Adrenal gland (tissue), 19 donors: ENCODE measurements at regions of chr7 and their contacts with region 1.

Region 1: DNA sequence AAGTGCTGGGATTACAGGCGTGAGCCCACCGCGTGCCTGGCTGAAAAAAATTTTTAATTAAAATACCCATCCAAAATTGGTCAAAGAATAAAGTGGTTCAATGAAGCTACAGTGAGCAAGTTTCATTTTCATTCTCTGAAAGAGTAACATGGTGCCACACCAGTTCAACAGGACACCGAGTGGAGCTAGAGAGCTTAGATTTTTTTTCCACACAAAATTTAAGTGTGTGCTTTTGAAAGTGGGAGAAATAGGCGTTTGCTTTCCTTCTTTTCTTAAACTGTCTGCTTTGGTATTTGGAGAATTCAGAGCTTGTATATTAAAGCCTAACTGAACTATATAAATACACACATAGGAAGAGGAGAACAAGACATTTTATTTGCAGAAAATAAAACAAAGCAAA is 43.4 kb downstream of the BPGM start:
- DNase-seq: no peak
- H3K4me3 ChIP-seq: peak overlapping the region in 1 of 4 donors; percentile 23
- H3K27ac ChIP-seq: peak overlapping the region in 2 of 5 donors; percentile 43 to 51
- H3K4me1 ChIP-seq: no peaks in the 10 kb centered on the region
- H3K27me3 ChIP-seq: no peaks in the 10 kb centered on the region
- CTCF ChIP-seq: peak; percentile 21 to 57 (median 42)
- POLR2A ChIP-seq: no peak

Region 2: GRCh38 chr7:134741907-134742635 is 52.1 kb after region 1 on chr7:
- intact Hi-C with region 1: loop called in 1 of 2 experiments (anchors 10 kb)
- DNase-seq: no peak
- H3K4me3 ChIP-seq: no peak overlapping the region
- H3K27ac ChIP-seq: peak overlapping the region in 2 of 5 donors; percentile 43 to 79
- H3K4me1 ChIP-seq: no peaks in the 10 kb centered on the region
- H3K27me3 ChIP-seq: no peaks in the 10 kb centered on the region
- CTCF ChIP-seq: no peak
- POLR2A ChIP-seq: no peak

Region 3: GRCh38 chr7:134789967-134790685 is 100.1 kb after region 1 on chr7:
- intact Hi-C with region 1: no loop called
- DNase-seq: no peak
- H3K4me3 ChIP-seq: no peak overlapping the region
- H3K27ac ChIP-seq: peak overlapping the region in 2 of 5 donors; percentile 57 to 70
- H3K4me1 ChIP-seq: peaks cover 0 to 6% of the 10 kb centered on the region in 2 donors
- H3K27me3 ChIP-seq: no peaks in the 10 kb centered on the region
- CTCF ChIP-seq: no peak
- POLR2A ChIP-seq: no peak

Region 4: DNA sequence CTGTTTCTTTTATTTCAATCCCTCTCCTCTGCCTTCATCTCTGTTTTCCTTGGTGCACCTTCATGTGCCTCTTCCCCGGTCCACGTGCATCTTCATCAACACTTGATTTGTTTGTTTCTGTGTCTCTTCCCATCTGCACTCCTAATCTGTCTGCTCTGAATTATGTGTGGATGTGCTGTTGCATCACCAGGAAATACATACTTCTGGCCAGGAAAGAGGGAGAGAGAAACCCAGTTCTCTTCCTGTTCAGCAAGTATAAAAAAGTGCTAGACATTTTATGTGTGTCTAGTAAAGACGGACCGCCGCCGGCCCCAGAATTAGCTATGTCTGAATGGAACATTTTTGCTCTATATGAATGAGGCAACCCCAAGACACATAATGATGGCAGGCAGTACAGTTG is 183.2 kb after region 1 on chr7:
- intact Hi-C with region 1: no loop called
- DNase-seq: no peak
- H3K4me3 ChIP-seq: no peak overlapping the region
- H3K27ac ChIP-seq: peak overlapping the region in 1 of 5 donors; percentile 21
- H3K4me1 ChIP-seq: peaks cover 0 to 10% of the 10 kb centered on the region in 2 donors
- H3K27me3 ChIP-seq: peaks cover 8% of the 10 kb centered on the region
- CTCF ChIP-seq: no peak
- POLR2A ChIP-seq: no peak

Region 5: DNA sequence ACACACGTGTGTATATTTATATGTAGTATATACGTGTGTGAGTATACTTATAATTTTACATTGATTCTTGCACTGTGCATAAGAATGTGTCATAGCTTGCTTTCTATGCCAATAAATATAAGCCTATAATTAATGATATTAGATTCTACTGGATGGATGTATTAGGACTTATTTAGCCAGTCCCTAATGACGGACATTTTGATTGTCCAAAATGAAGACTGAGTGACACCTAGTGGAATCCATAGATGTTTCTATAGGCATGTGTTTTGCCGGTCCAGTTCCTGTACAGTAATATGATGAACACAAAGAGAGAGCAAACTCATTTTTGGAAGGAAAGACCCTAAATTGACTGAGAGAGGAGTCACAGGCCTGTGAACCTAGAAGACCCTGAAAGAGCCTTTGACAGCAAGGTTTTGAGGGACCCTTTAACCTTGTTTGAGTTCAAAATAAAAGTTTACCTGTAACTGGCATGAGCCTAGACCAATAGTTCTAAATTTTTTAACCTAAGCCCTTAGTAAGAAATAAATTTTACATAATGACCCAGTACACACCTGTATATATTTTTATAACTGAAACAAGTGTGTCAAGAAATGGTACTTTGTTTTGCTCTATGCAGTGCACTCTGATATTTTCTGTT is 253.9 kb after region 1 on chr7:
- intact Hi-C with region 1: loop called in 1 of 2 experiments (anchors 10 kb)
- DNase-seq: no peak
- H3K4me3 ChIP-seq: no peak overlapping the region
- H3K27ac ChIP-seq: no peak overlapping the region
- H3K4me1 ChIP-seq: no peaks in the 10 kb centered on the region
- H3K27me3 ChIP-seq: no peaks in the 10 kb centered on the region
- CTCF ChIP-seq: peak in 3 of 6 experiments; percentile 18 to 26 (median 20)
- POLR2A ChIP-seq: no peak

Region 6: DNA sequence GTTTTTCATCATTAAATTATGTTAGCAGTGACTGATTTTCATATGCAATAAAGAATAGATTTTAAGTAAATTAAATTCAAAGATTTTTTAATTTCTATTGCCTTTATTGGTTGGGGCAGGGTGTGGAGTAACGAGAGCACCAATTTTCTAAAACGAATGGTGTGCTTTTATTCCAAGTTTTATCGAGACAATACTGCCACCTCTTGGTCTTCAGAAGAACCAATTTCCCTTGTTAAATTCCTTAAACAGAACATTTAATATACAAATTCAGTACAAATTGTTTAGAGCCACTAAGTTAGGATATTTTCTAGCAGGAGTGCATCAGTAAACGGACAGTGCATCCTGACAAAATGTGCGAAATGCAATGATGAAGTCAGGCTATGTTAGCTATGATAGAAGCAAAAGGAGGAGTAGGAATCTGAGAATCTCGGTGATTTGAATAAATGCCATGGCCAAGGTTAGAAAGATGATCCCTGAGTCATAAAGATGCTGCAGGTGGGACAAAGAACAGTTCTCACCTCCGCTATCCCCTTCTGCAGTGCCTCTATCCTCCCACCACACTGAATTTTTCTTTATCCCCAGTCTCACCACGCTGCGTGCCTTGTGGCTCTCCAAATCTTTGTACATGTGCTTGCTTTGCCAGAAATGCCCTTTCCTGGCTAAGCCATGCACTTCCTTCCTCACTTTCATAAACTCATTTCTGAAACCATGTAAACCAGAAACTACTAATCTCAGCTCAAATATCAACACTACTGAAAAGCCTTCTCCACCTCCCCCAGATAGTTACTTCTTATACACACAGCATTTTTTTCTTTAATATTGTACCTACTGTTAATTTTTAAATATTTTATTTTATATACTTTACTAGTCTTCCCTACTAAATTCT is 264.4 kb after region 1 on chr7:
- intact Hi-C with region 1: loop called (anchors 5 to 10 kb)
- DNase-seq: no peak
- H3K4me3 ChIP-seq: no peak overlapping the region
- H3K27ac ChIP-seq: no peak overlapping the region
- H3K4me1 ChIP-seq: no peaks in the 10 kb centered on the region
- H3K27me3 ChIP-seq: no peaks in the 10 kb centered on the region
- CTCF ChIP-seq: peak; percentile 34 to 71 (median 66)
- POLR2A ChIP-seq: no peak

Region 7: GRCh38 chr7:135170274-135170997 is 480.4 kb after region 1 on chr7 and contains the start of gene CYREN:
- intact Hi-C with region 1: loop called (anchors 10 kb)
- DNase-seq: peak; percentile 95 to 97 (median 96)
- H3K4me3 ChIP-seq: peak within 1 kb of the TSS; percentile 5 to 78 (median 56)
- H3K27ac ChIP-seq: peak within 1 kb of the TSS; percentile 77 to 97 (median 91)
- H3K4me1 ChIP-seq: peaks cover 0 to 30% of the 10 kb centered on the region in 2 donors
- H3K27me3 ChIP-seq: no peaks in the 10 kb centered on the region
- CTCF ChIP-seq: peak; percentile 54 to 82 (median 65)
- POLR2A ChIP-seq: peak; percentile 34 to 83
- total RNA-seq, gene CYREN: 35.0 to 66.2 (median 51.6) TPM